ENCODE measurements at regions of chrX and their contacts with region 1.

Region 1: DNA sequence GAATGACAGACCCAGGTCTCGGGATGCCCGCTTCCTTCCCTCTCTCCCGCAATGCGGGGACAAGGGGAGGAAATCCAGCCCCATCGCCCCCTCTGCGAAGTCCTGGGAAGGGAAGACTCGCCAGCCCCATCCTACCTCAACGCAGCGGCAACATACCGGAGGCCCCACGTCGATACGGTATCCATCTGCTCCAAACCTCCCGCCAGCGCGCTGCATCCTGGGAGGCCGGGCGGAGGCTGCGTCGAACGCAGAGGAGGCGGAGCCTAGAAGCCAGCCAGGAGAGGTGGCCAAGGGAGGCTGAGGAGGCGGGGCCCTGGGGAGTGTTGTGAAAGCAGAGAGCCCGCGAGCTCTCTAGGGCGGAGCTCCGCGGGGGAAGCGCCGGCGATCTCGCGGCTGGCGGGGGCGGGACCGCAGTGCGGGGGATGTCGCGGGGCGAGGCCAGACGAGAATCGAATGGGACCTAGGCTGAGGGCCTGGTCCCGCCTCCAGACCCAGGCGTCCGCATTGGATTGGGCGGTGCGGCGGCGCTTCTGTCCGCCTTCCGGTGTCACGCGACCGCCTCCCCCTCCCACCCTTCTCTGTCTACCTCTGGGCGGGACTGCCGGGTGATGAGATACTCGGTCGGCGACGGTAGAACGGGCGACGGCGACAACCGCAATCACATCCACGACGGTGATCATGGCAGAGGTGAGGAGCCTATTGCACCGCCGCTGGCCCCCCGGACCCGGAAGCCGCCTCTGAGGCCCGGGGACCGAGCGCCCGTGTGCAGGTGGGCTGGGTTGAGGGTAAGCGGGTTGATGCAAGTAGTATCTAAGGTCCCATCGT is at the starts of genes FANCB and MOSPD2:
- DNase-seq: peak; percentile 90 to 93 (median 93)
- H3K4me3 ChIP-seq: peak within 1 kb of the TSS; percentile 90 to 97 (median 96)
- H3K4me3 Mint-ChIP-seq: peak within 1 kb of the TSS; percentile 80 to 86
- H3K27ac ChIP-seq: peak within 1 kb of the TSS; percentile 86 to 94
- H3K27ac Mint-ChIP-seq: peak within 1 kb of the TSS; percentile 83 to 94 (median 89)
- H3K4me1 ChIP-seq: peaks cover 23 to 34% of the 10 kb centered on the region in 2 donors
- H3K4me1 Mint-ChIP-seq: peaks cover 28% of the 10 kb centered on the region
- H3K27me3 ChIP-seq: no peaks in the 10 kb centered on the region
- H3K27me3 Mint-ChIP-seq: peaks cover 0 to 2% (median 0%) of the 10 kb centered on the region in 3 donors
- CTCF ChIP-seq: no peak
- polyA plus RNA-seq, gene FANCB: 0.85 to 4.2 (median 2.6) TPM
- polyA plus RNA-seq, gene MOSPD2: 44.6 to 51.6 (median 45.7) TPM

Region 2: DNA sequence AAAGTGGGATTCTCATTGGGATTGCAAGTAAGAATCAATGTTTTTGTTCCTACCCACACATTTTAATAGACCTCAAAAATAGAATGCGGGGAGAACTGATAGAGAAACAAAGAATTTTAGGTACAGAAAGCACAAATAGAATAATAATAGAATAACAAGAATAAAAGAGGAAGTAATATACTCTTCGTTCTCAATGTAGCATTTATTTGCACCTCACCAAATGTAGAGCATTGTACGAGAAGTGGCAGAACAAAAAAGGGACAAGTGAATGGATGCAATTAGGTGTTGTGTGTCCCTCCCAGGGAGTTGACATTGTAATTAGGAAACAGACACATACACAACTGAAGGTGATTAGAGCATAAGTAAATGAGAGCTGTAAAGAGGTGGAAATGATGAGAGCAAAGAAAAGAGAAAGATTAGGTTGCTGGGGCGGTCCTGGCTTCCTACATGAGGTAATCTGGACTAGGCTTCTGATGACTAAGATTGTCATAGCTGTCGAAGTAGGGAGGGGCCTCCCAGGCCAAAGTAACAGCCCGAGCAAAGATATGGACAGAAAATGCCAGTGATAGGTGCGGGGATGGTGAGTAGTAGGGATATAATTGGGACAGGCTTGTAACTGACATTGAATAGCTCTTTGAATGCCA is 1173.8 kb before region 1 on chrX:
- intact Hi-C with region 1: loop called in 1 of 2 experiments (anchors 10 kb)
- DNase-seq: peak in 2 of 3 donors; percentile 33 to 60
- H3K4me3 ChIP-seq: no peak overlapping the region
- H3K4me3 Mint-ChIP-seq: peak overlapping the region in 1 of 2 donors; percentile 36
- H3K27ac ChIP-seq: peak overlapping the region in 1 of 2 donors; percentile 45
- H3K27ac Mint-ChIP-seq: peak overlapping the region; percentile 24 to 84 (median 72)
- H3K4me1 ChIP-seq: peaks cover 58 to 60% of the 10 kb centered on the region in 2 donors
- H3K4me1 Mint-ChIP-seq: peaks cover 70% of the 10 kb centered on the region
- H3K27me3 ChIP-seq: peaks cover 0 to 2% of the 10 kb centered on the region in 2 donors
- H3K27me3 Mint-ChIP-seq: peaks cover 0 to 9% (median 1%) of the 10 kb centered on the region in 3 donors
- CTCF ChIP-seq: no peak

Region 3: GRCh38 chrX:15686818-15687685 is 814.0 kb after region 1 on chrX:
- intact Hi-C with region 1: loop called in 1 of 2 experiments (anchors 10 kb)
- DNase-seq: peak; percentile 55 to 63 (median 63)
- H3K4me3 ChIP-seq: no peak overlapping the region
- H3K4me3 Mint-ChIP-seq: no peak overlapping the region
- H3K27ac ChIP-seq: peak overlapping the region in 1 of 2 donors; percentile 33
- H3K27ac Mint-ChIP-seq: peak overlapping the region in 3 of 7 donors; percentile 81 to 87 (median 82)
- H3K4me1 ChIP-seq: peaks cover 0 to 3% of the 10 kb centered on the region in 2 donors
- H3K4me1 Mint-ChIP-seq: peaks cover 19% of the 10 kb centered on the region
- H3K27me3 ChIP-seq: peaks cover 0 to 15% of the 10 kb centered on the region in 2 donors
- H3K27me3 Mint-ChIP-seq: peaks cover 0 to 4% (median 1%) of the 10 kb centered on the region in 3 donors
- CTCF ChIP-seq: peak; percentile 64

Measured in CD14-positive monocyte (primary cell).